Activated CD4-positive, alpha-beta memory T cell treated with anti-CD3 and anti-CD28 coated beads for 36 hours (primary cell): ENCODE measurements at regions of chr4 and their contacts with region 1.

Region 1: DNA sequence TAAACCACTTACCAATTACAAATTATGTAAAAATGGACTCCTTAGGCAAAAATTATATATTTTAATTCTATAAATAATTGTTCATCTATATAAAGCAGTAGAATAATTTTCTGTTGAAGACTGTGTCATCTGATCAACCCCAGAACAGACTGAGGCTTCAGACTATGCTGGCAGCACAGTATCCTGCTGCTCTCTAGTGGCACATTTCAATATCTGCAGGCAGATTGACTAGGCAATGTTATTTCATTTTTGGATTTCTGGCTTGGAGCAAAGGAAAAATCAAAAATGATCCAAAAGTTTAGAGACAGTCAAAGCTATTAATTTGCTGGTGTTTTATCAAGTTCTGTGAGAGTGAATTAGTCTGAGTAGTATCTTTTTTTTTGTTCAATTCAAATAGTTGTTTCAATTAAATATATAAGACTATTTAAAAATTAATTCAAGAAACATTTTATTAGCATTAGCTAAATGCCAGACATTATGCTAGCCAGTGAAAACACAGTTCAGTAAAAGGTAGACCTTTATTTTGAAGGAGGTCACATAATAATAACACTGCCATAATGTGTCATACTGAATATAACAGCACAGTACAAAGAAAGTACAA is 21.3 kb upstream of the SULT1E1 start:
- DNase-seq: peak; percentile 18
- H3K4me3 Mint-ChIP-seq: no peak overlapping the region
- H3K27ac Mint-ChIP-seq: no peak overlapping the region
- H3K4me1 Mint-ChIP-seq: no peaks in the 10 kb centered on the region
- H3K27me3 Mint-ChIP-seq: no peaks in the 10 kb centered on the region

Region 2: GRCh38 chr4:68498413-68499007 is 1382.8 kb before region 1 on chr4:
- CTCF ChIA-PET with region 1: no interaction called
- POLR2A ChIA-PET with region 1: no interaction called
- intact Hi-C with region 1: loop called (anchors 5 kb)
- DNase-seq: peak; percentile 75
- H3K4me3 Mint-ChIP-seq: no peak overlapping the region
- H3K27ac Mint-ChIP-seq: no peak overlapping the region
- H3K4me1 Mint-ChIP-seq: peaks cover 7% of the 10 kb centered on the region
- H3K27me3 Mint-ChIP-seq: no peaks in the 10 kb centered on the region

Region 3: GRCh38 chr4:69322055-69322454 is 559.2 kb before region 1 on chr4:
- CTCF ChIA-PET with region 1: no interaction called
- POLR2A ChIA-PET with region 1: no interaction called
- intact Hi-C with region 1: loop called (anchors 10 kb)
- DNase-seq: no peak
- H3K4me3 Mint-ChIP-seq: no peak overlapping the region
- H3K27ac Mint-ChIP-seq: no peak overlapping the region
- H3K4me1 Mint-ChIP-seq: no peaks in the 10 kb centered on the region
- H3K27me3 Mint-ChIP-seq: no peaks in the 10 kb centered on the region

Region 4: DNA sequence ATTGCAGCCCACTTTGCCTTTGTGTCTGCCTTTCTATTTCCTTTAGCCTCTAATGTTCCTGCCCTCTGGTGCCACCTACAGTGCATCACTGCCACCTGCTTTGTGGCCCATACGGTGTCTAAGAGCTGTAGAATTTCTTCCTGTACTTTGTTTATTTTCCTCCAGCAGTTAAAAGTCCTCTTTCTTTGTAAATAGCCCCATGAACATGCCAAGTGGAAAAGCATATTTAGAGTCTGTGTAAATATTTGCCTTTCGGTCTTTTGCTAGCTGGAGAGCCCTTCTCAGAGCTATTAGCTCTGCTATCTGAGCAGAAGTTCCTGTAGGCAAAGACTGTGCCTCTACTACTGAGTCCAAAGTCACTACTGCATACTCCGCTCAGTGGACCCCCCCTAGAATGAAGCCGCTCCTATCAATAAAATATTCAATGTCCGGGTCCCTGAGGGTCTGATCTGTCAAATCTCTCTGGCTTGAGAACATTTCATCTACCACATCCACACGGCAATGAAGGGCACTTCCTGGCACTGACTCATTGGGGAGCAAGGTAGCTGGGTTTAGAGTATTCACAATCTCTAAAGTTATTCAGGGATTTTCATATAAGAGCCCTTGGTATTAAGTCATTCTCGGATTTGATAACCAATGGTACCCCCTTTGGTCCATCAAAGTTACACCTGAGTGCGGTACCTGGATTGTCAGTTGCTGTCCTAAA is 57.6 kb before region 1 on chr4:
- CTCF ChIA-PET with region 1: interaction called, 6 read pairs
- POLR2A ChIA-PET with region 1: no interaction called
- intact Hi-C with region 1: loop called (anchors 2 kb)
- DNase-seq: peak; percentile 55
- H3K4me3 Mint-ChIP-seq: no peak overlapping the region
- H3K27ac Mint-ChIP-seq: no peak overlapping the region
- H3K4me1 Mint-ChIP-seq: peaks cover 2% of the 10 kb centered on the region
- H3K27me3 Mint-ChIP-seq: no peaks in the 10 kb centered on the region

Region 5: GRCh38 chr4:69999420-69999819 is 118.1 kb after region 1 on chr4:
- CTCF ChIA-PET with region 1: no interaction called
- POLR2A ChIA-PET with region 1: no interaction called
- intact Hi-C with region 1: no loop called
- DNase-seq: no peak
- H3K4me3 Mint-ChIP-seq: no peak overlapping the region
- H3K27ac Mint-ChIP-seq: no peak overlapping the region
- H3K4me1 Mint-ChIP-seq: no peaks in the 10 kb centered on the region
- H3K27me3 Mint-ChIP-seq: no peaks in the 10 kb centered on the region